Endothelial cell of umbilical vein (primary cell): ENCODE measurements at regions of chr10 and their contacts with region 1.

Region 1: GRCh38 chr10:116974473-116975005 is 30.4 kb downstream of the SHTN1 start:
- DNase-seq: peak; percentile 94
- H3K4me3 ChIP-seq: peak overlapping the region in 2 of 3 experiments; percentile 40 to 54
- H3K27ac ChIP-seq: peak overlapping the region; percentile 63
- H3K4me1 ChIP-seq: peaks cover 20% of the 10 kb centered on the region
- H3K27me3 ChIP-seq: no peaks in the 10 kb centered on the region
- CTCF ChIP-seq: no peak
- POLR2A ChIP-seq: no peak

Region 2: GRCh38 chr10:116985611-116986010 is 11.1 kb after region 1 on chr10:
- CTCF ChIA-PET with region 1: interaction called, 5 read pairs
- POLR2A ChIA-PET with region 1: no interaction called
- dilution Hi-C with region 1: no loop called
- intact Hi-C with region 1: loop called (anchors 2 kb)
- DNase-seq: peak; percentile 31
- H3K4me3 ChIP-seq: no peak overlapping the region
- H3K27ac ChIP-seq: no peak overlapping the region
- H3K4me1 ChIP-seq: peaks cover 16% of the 10 kb centered on the region
- H3K27me3 ChIP-seq: no peaks in the 10 kb centered on the region
- CTCF ChIP-seq: no peak
- POLR2A ChIP-seq: no peak